ENCODE measurements at regions of chr4 and their contacts with region 1.

Region 1: DNA sequence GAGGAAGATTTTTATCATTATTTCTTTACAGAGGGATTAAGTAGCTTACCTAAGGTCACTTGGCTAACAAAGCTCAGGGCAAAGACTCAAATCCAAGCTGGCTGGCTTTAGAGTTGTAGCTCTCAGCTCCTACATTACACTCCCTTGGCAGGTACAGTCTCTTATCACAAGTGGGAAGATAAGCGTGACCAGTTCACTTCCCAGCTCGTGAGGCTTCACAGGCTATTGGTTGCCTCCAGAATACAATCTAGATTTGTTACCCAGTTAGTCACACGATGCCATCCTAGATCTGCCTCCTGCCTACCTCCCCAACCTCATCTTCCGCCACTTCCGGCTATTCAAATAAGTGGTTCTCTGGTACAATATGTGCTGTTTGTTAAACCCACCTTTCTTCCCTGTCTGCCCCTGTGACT is 3.7 kb downstream of the MMRN1 start:
- DNase-seq: no peak
- ATAC-seq: no peak
- H3K4me3 ChIP-seq: no peak overlapping the region
- H3K4me3 Mint-ChIP-seq: no peak overlapping the region
- H3K27ac ChIP-seq: no peak overlapping the region
- H3K27ac Mint-ChIP-seq: no peak overlapping the region
- H3K4me1 ChIP-seq: peaks cover 18% of the 10 kb centered on the region
- H3K4me1 Mint-ChIP-seq: peaks cover 22% of the 10 kb centered on the region
- H3K27me3 ChIP-seq: no peaks in the 10 kb centered on the region
- H3K27me3 Mint-ChIP-seq: peaks cover 2% of the 10 kb centered on the region
- CTCF ChIP-seq: no peak

Region 2: DNA sequence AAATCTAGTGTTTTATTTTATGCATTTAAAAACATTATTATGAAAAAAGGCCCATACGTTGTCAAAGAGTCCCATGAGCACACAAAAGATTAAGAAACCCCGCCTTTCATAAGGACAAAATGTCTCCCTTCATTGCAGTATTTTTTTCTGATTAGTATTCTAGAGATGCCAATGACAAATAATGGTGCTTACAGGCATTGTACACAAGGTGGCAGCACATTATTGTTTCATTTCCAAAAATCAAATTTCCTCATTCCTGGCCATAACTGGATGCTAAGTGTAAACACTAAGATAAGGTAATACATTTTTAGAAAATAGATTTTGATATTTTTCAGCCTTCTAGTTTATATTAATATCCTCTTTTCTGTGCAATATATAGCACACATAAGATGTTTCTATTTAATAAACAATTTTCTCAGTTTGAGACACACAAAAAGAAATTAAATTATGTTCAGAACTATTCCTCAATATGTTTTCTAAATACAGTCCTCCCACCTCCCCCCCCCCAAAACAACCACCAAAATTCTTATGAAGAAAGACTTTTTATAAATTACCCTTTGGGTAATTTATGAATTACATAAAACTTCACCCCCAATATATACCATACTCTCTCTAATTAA is 739.3 kb before region 1 on chr4:
- CTCF ChIA-PET with region 1: no interaction called
- POLR2A ChIA-PET with region 1: no interaction called
- intact Hi-C with region 1: loop called (anchors 1 kb)
- DNase-seq: peak in 2 of 9 experiments; percentile 40 to 57
- ATAC-seq: peak; percentile 51
- H3K4me3 ChIP-seq: no peak overlapping the region
- H3K4me3 Mint-ChIP-seq: no peak overlapping the region
- H3K27ac ChIP-seq: no peak overlapping the region
- H3K27ac Mint-ChIP-seq: no peak overlapping the region
- H3K4me1 ChIP-seq: no peaks in the 10 kb centered on the region
- H3K4me1 Mint-ChIP-seq: no peaks in the 10 kb centered on the region
- H3K27me3 ChIP-seq: no peaks in the 10 kb centered on the region
- H3K27me3 Mint-ChIP-seq: peaks cover 6% of the 10 kb centered on the region
- CTCF ChIP-seq: peak; percentile 95

Region 3: DNA sequence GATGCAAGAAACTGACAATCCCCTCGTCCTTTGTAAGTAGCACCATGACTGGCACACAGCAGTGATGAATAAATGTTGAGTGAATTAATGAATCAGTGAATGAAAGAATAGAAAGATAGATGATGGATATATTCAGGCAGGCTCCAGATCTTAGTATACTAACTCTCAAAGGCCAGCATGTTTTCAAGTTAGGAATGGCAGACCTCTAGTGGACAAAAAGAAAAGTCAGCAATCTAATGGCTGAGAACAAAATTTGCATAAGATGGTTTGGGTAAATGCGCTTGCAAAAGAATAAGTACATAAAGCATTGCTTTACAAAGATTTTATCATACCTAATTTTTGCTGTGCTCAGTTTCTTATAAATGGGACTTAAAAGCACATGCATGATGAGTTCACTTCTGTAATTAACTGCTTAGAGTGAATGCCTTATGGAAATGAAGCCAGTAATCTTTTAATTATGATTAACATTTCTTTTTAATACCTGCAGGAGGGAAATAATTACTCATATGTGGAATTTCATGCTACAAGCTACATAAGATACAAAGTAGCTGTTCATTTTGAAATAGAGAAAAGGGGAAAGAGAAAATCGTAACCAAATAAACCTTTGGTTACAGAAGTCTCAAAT is 463.8 kb before region 1 on chr4:
- CTCF ChIA-PET with region 1: interaction called, 4 read pairs
- POLR2A ChIA-PET with region 1: no interaction called
- intact Hi-C with region 1: loop called (anchors 1 to 2 kb)
- DNase-seq: peak in 2 of 9 experiments; percentile 57 to 70
- ATAC-seq: peak; percentile 67
- H3K4me3 ChIP-seq: no peak overlapping the region
- H3K4me3 Mint-ChIP-seq: no peak overlapping the region
- H3K27ac ChIP-seq: no peak overlapping the region
- H3K27ac Mint-ChIP-seq: no peak overlapping the region
- H3K4me1 ChIP-seq: peaks cover 6% of the 10 kb centered on the region
- H3K4me1 Mint-ChIP-seq: peaks cover 7% of the 10 kb centered on the region
- H3K27me3 ChIP-seq: no peaks in the 10 kb centered on the region
- H3K27me3 Mint-ChIP-seq: peaks cover 4% of the 10 kb centered on the region
- CTCF ChIP-seq: peak; percentile 78

Region 4: DNA sequence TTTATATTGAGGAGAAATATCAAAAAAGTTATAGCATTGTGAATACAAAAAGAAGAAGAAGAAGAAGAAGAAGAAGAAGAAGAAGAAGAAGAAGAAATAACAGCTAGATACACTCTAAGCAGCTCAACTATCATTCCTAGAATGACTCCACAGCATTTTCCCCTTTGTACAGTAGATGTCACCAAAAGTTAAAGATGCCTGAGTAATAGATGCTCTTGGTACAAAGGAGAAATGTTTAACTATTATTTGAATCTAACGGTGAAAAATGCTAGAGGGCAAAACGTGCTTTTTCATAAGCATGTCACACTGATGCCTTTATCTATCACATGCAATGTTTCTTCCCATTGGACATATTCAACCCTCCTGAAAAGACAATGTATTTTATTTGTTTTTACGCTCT is 412.3 kb before region 1 on chr4:
- CTCF ChIA-PET with region 1: no interaction called
- POLR2A ChIA-PET with region 1: no interaction called
- intact Hi-C with region 1: loop called in 1 of 2 experiments (anchors 2 kb)
- DNase-seq: no peak
- ATAC-seq: no peak
- H3K4me3 ChIP-seq: no peak overlapping the region
- H3K4me3 Mint-ChIP-seq: no peak overlapping the region
- H3K27ac ChIP-seq: no peak overlapping the region
- H3K27ac Mint-ChIP-seq: no peak overlapping the region
- H3K4me1 ChIP-seq: no peaks in the 10 kb centered on the region
- H3K4me1 Mint-ChIP-seq: no peaks in the 10 kb centered on the region
- H3K27me3 ChIP-seq: no peaks in the 10 kb centered on the region
- H3K27me3 Mint-ChIP-seq: no peaks in the 10 kb centered on the region
- CTCF ChIP-seq: no peak

Region 5: DNA sequence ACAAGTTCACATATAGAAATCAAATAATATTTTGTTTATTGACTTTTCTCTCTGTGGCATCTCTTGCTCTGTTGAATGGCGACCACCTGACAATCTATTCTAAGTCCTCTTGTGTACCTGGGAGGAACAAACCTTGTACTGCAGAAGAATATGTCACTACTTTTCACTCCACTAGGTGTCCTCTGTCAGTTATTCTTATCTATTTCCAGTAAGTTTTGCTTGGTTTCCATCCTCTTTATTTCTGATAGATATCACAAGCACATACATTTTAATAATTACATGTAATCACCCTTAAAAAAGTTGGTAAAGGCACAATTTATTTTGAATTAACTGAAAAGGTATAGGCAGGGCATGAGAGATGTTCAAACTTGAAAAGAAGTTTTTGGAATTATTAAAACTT is 299.7 kb before region 1 on chr4:
- CTCF ChIA-PET with region 1: no interaction called
- POLR2A ChIA-PET with region 1: no interaction called
- intact Hi-C with region 1: loop called (anchors 2 to 5 kb)
- DNase-seq: peak in 1 of 9 experiments; percentile 3
- ATAC-seq: no peak
- H3K4me3 ChIP-seq: no peak overlapping the region
- H3K4me3 Mint-ChIP-seq: no peak overlapping the region
- H3K27ac ChIP-seq: no peak overlapping the region
- H3K27ac Mint-ChIP-seq: no peak overlapping the region
- H3K4me1 ChIP-seq: no peaks in the 10 kb centered on the region
- H3K4me1 Mint-ChIP-seq: no peaks in the 10 kb centered on the region
- H3K27me3 ChIP-seq: no peaks in the 10 kb centered on the region
- H3K27me3 Mint-ChIP-seq: peaks cover 10% of the 10 kb centered on the region
- CTCF ChIP-seq: no peak

Region 6: GRCh38 chr4:89657931-89658700 is 240.2 kb before region 1 on chr4:
- CTCF ChIA-PET with region 1: interaction called, 5 read pairs
- POLR2A ChIA-PET with region 1: no interaction called
- intact Hi-C with region 1: loop called (anchors 1 to 5 kb)
- DNase-seq: peak in 2 of 9 experiments; percentile 4 to 22
- ATAC-seq: no peak
- H3K4me3 ChIP-seq: no peak overlapping the region
- H3K4me3 Mint-ChIP-seq: no peak overlapping the region
- H3K27ac ChIP-seq: no peak overlapping the region
- H3K27ac Mint-ChIP-seq: no peak overlapping the region
- H3K4me1 ChIP-seq: no peaks in the 10 kb centered on the region
- H3K4me1 Mint-ChIP-seq: no peaks in the 10 kb centered on the region
- H3K27me3 ChIP-seq: no peaks in the 10 kb centered on the region
- H3K27me3 Mint-ChIP-seq: peaks cover 2% of the 10 kb centered on the region
- CTCF ChIP-seq: peak; percentile 36